Naive thymus-derived CD4-positive, alpha-beta T cell (primary cell): ENCODE measurements at regions of chr11 and their contacts with region 1.

Region 1: DNA sequence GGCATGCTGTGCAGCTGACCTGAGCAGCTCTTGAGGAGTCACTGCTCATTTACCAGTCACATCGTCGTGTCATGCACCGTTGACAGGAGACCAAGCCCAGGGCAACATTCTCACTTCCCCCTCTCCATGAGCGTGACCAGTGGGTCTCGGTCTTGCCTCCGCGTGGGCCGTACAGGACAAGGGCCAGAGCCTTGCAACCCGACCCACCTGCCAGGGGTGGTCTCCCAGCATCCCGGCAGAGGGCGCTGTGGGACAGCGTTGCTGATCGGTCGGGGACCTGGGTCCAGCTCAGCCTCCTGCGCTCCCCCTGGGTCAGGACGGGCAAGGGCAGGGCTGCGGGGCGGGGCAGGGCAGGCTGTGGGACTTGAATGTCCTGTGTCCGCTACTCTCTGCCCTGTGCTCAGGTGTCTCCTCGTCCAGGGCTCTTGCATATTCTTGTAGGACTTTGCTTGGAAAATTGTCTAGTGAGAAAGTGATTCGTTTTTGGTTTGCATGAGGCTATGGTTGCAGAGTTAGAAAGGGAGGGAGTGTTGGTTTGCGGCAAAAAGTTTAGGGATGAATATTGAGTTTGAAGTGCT is 16.2 kb downstream of the EIF4G2 start:
- DNase-seq: peak; percentile 58 to 90 (median 77)
- ATAC-seq: peak; percentile 89
- H3K4me3 ChIP-seq: peak overlapping the region; percentile 40
- H3K4me3 Mint-ChIP-seq: peak overlapping the region in 6 of 10 donors; percentile 1 to 37 (median 16)
- H3K27ac ChIP-seq: no peak overlapping the region
- H3K27ac Mint-ChIP-seq: peak overlapping the region in 2 of 9 donors; percentile 15 to 24
- H3K4me1 ChIP-seq: peaks cover 4 to 20% of the 10 kb centered on the region in 2 donors
- H3K4me1 Mint-ChIP-seq: peaks cover 14 to 26% (median 23%) of the 10 kb centered on the region in 7 donors
- H3K27me3 ChIP-seq: no peaks in the 10 kb centered on the region
- H3K27me3 Mint-ChIP-seq: peaks cover 0 to 23% (median 8%) of the 10 kb centered on the region in 5 donors

Region 2: GRCh38 chr11:10096987-10097386 is 695.5 kb before region 1 on chr11:
- CTCF ChIA-PET with region 1: no interaction called
- POLR2A ChIA-PET with region 1: no interaction called
- intact Hi-C with region 1: no loop called
- DNase-seq: no peak
- ATAC-seq: no peak
- H3K4me3 ChIP-seq: no peak overlapping the region
- H3K4me3 Mint-ChIP-seq: no peak overlapping the region
- H3K27ac ChIP-seq: no peak overlapping the region
- H3K27ac Mint-ChIP-seq: no peak overlapping the region
- H3K4me1 ChIP-seq: no peaks in the 10 kb centered on the region
- H3K4me1 Mint-ChIP-seq: peaks cover 0 to 6% (median 4%) of the 10 kb centered on the region in 7 donors
- H3K27me3 ChIP-seq: no peaks in the 10 kb centered on the region
- H3K27me3 Mint-ChIP-seq: no peaks in the 10 kb centered on the region

Region 3: GRCh38 chr11:10770626-10771254 is 21.7 kb before region 1 on chr11:
- CTCF ChIA-PET with region 1: interaction called, 4 read pairs
- POLR2A ChIA-PET with region 1: interaction called, 10 read pairs
- intact Hi-C with region 1: no loop called
- DNase-seq: no peak
- ATAC-seq: no peak
- H3K4me3 ChIP-seq: no peak overlapping the region
- H3K4me3 Mint-ChIP-seq: no peak overlapping the region
- H3K27ac ChIP-seq: no peak overlapping the region
- H3K27ac Mint-ChIP-seq: peak overlapping the region in 1 of 9 donors; percentile 48
- H3K4me1 ChIP-seq: no peaks in the 10 kb centered on the region
- H3K4me1 Mint-ChIP-seq: peaks cover 0 to 4% (median 0%) of the 10 kb centered on the region in 7 donors
- H3K27me3 ChIP-seq: no peaks in the 10 kb centered on the region
- H3K27me3 Mint-ChIP-seq: no peaks in the 10 kb centered on the region

Region 4: GRCh38 chr11:10803676-10804075 is 11.2 kb after region 1 on chr11:
- CTCF ChIA-PET with region 1: interaction called, 18 read pairs
- POLR2A ChIA-PET with region 1: interaction called, 88 read pairs
- intact Hi-C with region 1: loop called in 1 of 2 experiments (anchors 1 kb)
- DNase-seq: no peak
- ATAC-seq: no peak
- H3K4me3 ChIP-seq: no peak overlapping the region
- H3K4me3 Mint-ChIP-seq: peak overlapping the region in 3 of 10 donors; percentile 4 to 27 (median 15)
- H3K27ac ChIP-seq: peak overlapping the region; percentile 8
- H3K27ac Mint-ChIP-seq: peak overlapping the region in 8 of 9 donors; percentile 13 to 95 (median 62)
- H3K4me1 ChIP-seq: peaks cover 59 to 63% of the 10 kb centered on the region in 2 donors
- H3K4me1 Mint-ChIP-seq: peaks cover 50 to 89% (median 77%) of the 10 kb centered on the region in 7 donors
- H3K27me3 ChIP-seq: no peaks in the 10 kb centered on the region
- H3K27me3 Mint-ChIP-seq: no peaks in the 10 kb centered on the region

Region 5: GRCh38 chr11:10906513-10906912 is 114.0 kb after region 1 on chr11:
- CTCF ChIA-PET with region 1: interaction called, 13 read pairs
- POLR2A ChIA-PET with region 1: interaction called, 6 read pairs
- intact Hi-C with region 1: loop called in 1 of 2 experiments (anchors 1 kb)
- DNase-seq: no peak
- ATAC-seq: no peak
- H3K4me3 ChIP-seq: no peak overlapping the region
- H3K4me3 Mint-ChIP-seq: no peak overlapping the region
- H3K27ac ChIP-seq: no peak overlapping the region
- H3K27ac Mint-ChIP-seq: peak overlapping the region in 1 of 9 donors; percentile 25
- H3K4me1 ChIP-seq: no peaks in the 10 kb centered on the region
- H3K4me1 Mint-ChIP-seq: peaks cover 0 to 5% (median 0%) of the 10 kb centered on the region in 7 donors
- H3K27me3 ChIP-seq: no peaks in the 10 kb centered on the region
- H3K27me3 Mint-ChIP-seq: peaks cover 0 to 16% (median 12%) of the 10 kb centered on the region in 5 donors

Region 6: DNA sequence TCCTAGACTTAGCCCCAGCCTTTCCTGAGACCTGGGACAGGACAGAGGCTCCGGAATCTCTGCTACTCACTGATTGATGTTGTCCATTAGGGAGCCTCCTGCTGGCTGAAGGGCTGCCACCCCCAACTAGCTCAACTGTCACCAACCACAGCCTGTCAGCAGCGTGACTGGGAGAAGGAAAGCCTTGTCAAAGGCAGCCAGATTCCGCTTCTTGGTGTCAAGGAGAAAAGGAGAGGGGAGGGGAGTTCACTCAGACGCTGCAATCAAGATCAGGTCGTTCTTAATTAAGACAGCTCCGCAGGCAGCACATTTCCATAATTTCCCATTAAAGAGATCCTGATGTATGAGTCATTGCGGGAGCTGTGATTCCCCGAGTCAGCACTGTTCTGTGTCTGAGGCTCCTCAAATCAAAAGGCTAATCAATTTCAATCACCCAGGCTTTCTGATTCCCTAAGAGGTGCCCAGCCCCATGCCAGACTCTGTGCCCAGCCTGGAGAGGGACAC is 218.2 kb after region 1 on chr11:
- CTCF ChIA-PET with region 1: interaction called, 10 read pairs
- POLR2A ChIA-PET with region 1: no interaction called
- intact Hi-C with region 1: no loop called
- DNase-seq: no peak
- ATAC-seq: peak; percentile 51
- H3K4me3 ChIP-seq: no peak overlapping the region
- H3K4me3 Mint-ChIP-seq: no peak overlapping the region
- H3K27ac ChIP-seq: no peak overlapping the region
- H3K27ac Mint-ChIP-seq: no peak overlapping the region
- H3K4me1 ChIP-seq: no peaks in the 10 kb centered on the region
- H3K4me1 Mint-ChIP-seq: no peaks in the 10 kb centered on the region
- H3K27me3 ChIP-seq: no peaks in the 10 kb centered on the region
- H3K27me3 Mint-ChIP-seq: peaks cover 24 to 54% (median 35%) of the 10 kb centered on the region in 5 donors

Region 7: DNA sequence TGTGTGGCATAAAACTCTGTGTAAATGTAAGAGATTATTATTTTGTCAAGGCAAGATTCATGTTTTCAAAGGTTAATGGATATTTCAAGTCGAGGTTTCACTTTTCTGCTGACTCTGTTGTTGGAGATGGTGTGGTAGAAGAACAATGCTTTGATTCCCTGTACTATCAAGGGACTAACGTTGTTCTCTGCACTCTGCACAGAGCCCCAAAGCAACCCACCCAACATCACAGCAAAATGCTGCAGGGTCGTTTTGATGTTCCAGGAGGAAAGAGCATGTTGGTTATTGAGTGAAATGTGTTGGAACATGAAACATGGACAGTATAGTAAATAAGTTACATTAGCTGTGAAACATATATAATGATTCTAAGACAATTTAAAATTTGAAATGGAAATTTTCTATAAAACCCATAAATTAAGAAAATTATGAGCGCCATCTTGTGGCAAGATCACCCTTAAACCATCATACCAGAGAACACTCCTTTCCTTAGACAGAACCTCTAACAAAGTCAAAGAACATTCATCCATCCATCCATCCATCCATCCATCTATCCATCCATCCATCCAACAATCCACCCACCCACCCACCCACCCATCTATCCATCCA is 229.7 kb after region 1 on chr11:
- CTCF ChIA-PET with region 1: interaction called, 47 read pairs
- POLR2A ChIA-PET with region 1: interaction called, 5 read pairs
- intact Hi-C with region 1: loop called (anchors 1 kb)
- DNase-seq: peak in 4 of 9 donors; percentile 9 to 35 (median 26)
- ATAC-seq: peak; percentile 37
- H3K4me3 ChIP-seq: no peak overlapping the region
- H3K4me3 Mint-ChIP-seq: no peak overlapping the region
- H3K27ac ChIP-seq: no peak overlapping the region
- H3K27ac Mint-ChIP-seq: no peak overlapping the region
- H3K4me1 ChIP-seq: no peaks in the 10 kb centered on the region
- H3K4me1 Mint-ChIP-seq: no peaks in the 10 kb centered on the region
- H3K27me3 ChIP-seq: no peaks in the 10 kb centered on the region
- H3K27me3 Mint-ChIP-seq: peaks cover 0 to 17% (median 0%) of the 10 kb centered on the region in 5 donors

Region 8: GRCh38 chr11:11157185-11157584 is 364.7 kb after region 1 on chr11:
- CTCF ChIA-PET with region 1: interaction called, 3 read pairs
- POLR2A ChIA-PET with region 1: no interaction called
- intact Hi-C with region 1: loop called (anchors 2 to 10 kb)
- DNase-seq: peak in 8 of 9 donors; percentile 28 to 79 (median 72)
- ATAC-seq: peak; percentile 75
- H3K4me3 ChIP-seq: no peak overlapping the region
- H3K4me3 Mint-ChIP-seq: peak overlapping the region in 6 of 10 donors; percentile 75 to 92 (median 84)
- H3K27ac ChIP-seq: peak overlapping the region; percentile 72
- H3K27ac Mint-ChIP-seq: peak overlapping the region in 8 of 9 donors; percentile 86 to 99 (median 94)
- H3K4me1 ChIP-seq: peaks cover 11 to 28% of the 10 kb centered on the region in 2 donors
- H3K4me1 Mint-ChIP-seq: peaks cover 15 to 49% (median 44%) of the 10 kb centered on the region in 7 donors
- H3K27me3 ChIP-seq: no peaks in the 10 kb centered on the region
- H3K27me3 Mint-ChIP-seq: peaks cover 0 to 8% (median 0%) of the 10 kb centered on the region in 5 donors